ENCODE measurements at regions of chr10 and their contacts with region 1.

Region 1: DNA sequence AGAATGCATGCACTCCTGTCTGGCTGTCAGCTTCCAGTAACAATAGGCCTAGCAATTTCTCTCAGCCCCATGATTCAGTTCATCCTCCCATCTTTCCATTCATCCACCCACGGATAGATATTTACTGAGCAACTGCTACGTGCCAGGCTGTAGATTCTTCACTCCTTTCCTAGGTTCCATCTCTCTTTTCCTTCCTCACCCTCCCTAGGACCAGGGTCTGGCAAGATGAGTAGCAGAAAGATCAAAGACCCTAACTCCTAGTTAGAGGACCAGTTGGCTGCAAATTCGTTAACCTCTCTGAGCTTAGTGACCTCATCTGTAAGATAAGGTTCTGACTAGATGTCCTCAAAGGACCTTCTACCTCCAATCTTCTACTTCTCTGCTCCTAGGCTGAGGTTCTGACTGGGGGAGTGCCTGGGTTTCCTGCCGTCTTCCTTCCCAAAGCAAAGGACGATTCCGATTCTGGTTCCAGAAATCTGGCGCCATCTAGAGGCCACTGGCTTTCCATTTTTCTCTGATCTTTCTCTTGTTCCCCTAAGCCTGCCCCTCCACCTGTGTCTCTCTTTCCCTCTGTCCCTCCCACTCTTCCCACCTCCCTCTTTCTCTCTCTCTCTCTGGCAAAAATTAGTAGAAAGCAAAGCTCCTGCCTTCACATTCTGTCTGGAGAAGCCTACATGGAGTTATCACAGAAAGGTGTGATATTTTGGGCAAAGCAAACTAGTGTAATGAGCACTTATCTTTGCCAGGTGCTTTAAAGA is 26.2 kb downstream of the TBATA start:
- DNase-seq: peak; percentile 43 to 62 (median 55)
- H3K4me3 ChIP-seq: no peak overlapping the region
- H3K4me3 Mint-ChIP-seq: no peak overlapping the region
- H3K27ac ChIP-seq: no peak overlapping the region
- H3K27ac Mint-ChIP-seq: no peak overlapping the region
- H3K4me1 ChIP-seq: no peaks in the 10 kb centered on the region
- H3K4me1 Mint-ChIP-seq: peaks cover 0 to 2% (median under 1%) of the 10 kb centered on the region in 4 donors
- H3K27me3 ChIP-seq: no peaks in the 10 kb centered on the region
- H3K27me3 Mint-ChIP-seq: no peaks in the 10 kb centered on the region

Region 2: DNA sequence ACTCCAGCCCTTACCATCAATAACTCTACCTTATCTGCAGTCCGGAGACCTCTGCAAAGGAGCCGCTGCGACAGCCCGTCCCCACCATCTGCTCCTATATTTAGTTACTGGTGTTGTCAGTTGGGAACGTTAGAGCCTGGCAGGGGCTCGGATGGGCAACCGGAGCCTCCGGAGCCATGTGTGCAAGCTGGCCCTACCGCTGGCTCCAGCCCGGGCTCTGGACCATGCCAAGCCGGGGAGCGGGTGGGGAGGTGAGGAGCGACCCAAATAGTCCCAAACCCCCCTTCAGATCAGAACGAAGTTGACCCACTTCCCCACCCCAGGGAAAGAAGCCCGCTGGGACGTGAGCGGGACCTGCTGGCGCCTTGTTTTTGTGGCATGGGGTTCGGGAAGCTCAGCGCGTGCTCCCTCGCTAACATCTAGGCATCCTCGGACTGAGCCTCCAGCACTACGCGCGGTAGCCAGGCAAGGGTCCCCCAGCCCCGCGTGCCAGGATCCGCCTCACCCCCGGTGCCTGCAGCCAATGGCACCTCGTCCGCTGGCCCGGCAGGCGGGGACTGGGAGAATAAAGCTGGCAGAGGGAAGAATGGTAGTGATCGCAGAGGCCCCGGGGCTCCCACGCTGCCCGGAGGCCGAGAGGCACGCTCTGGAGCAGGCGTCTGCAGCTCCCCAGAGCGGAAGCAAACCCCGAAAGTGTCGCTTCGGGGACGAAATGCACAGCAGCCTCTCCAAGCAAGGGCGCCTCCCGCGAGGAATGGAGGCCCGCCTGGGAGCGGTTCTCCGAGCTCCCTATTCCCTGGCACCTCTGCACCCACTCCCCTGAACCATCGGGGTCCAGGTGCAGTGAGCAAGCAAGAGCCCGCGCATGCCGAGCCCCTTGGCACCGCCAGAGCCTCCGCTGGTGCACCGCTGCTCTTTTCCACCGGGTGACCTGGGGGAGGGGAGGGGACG is 377.2 kb before region 1 on chr10:
- CTCF ChIA-PET with region 1: no interaction called
- POLR2A ChIA-PET with region 1: no interaction called
- intact Hi-C with region 1: loop called (anchors 10 kb)
- DNase-seq: peak in 1 of 5 donors; percentile 10
- H3K4me3 ChIP-seq: peak overlapping the region; percentile 82 to 88
- H3K4me3 Mint-ChIP-seq: peak overlapping the region; percentile 88 to 92 (median 90)
- H3K27ac ChIP-seq: peak overlapping the region; percentile 16
- H3K27ac Mint-ChIP-seq: peak overlapping the region in 4 of 7 donors; percentile 37 to 70 (median 50)
- H3K4me1 ChIP-seq: peaks cover 13% of the 10 kb centered on the region
- H3K4me1 Mint-ChIP-seq: peaks cover 0 to 14% (median 6%) of the 10 kb centered on the region in 4 donors
- H3K27me3 ChIP-seq: no peaks in the 10 kb centered on the region
- H3K27me3 Mint-ChIP-seq: no peaks in the 10 kb centered on the region

Region 3: DNA sequence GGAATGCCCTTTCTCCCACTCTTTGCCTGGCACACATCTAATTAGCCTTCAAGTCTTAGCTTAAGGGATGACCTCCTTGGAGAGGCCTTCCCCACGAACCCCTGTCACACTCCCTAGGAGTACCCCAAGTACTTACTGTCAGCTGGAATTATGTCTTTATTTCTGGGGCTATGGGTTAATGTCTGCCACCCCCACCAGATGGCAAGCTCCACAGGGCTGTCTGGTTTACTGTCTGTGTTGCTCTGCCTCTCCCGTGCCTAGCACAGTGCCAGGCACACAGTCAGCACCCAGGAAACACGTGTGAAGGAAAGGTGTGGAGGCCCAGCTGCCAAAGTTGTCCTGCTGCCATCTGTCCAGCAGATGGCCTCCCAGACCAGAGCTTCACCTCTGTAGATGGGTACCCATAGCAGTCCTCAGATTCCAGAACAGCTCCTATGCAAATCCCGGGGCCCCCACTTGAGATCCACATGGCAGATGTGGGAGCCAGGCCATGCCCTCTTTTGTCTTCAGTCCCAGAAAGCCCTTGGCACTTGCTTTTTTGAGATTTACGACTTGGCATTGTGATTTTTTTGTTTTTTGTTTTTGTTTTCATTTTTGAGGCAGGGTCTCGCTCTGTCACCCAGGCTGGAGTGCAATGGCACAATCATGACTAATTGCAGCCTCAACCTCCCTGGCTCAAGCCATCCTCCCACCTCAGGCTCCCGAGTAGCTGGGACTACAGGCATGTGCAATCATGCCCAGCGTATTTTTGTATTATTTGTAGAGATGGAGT is 297.5 kb before region 1 on chr10:
- CTCF ChIA-PET with region 1: interaction called, 28 read pairs
- POLR2A ChIA-PET with region 1: no interaction called
- intact Hi-C with region 1: no loop called
- DNase-seq: peak in 4 of 5 donors; percentile 31 to 40 (median 32)
- H3K4me3 ChIP-seq: no peak overlapping the region
- H3K4me3 Mint-ChIP-seq: no peak overlapping the region
- H3K27ac ChIP-seq: no peak overlapping the region
- H3K27ac Mint-ChIP-seq: peak overlapping the region in 2 of 7 donors; percentile 35 to 64
- H3K4me1 ChIP-seq: peaks cover 10% of the 10 kb centered on the region
- H3K4me1 Mint-ChIP-seq: peaks cover 0 to 16% (median 1%) of the 10 kb centered on the region in 4 donors
- H3K27me3 ChIP-seq: peaks cover 11% of the 10 kb centered on the region
- H3K27me3 Mint-ChIP-seq: peaks cover 25 to 32% of the 10 kb centered on the region in 2 donors

Region 4: DNA sequence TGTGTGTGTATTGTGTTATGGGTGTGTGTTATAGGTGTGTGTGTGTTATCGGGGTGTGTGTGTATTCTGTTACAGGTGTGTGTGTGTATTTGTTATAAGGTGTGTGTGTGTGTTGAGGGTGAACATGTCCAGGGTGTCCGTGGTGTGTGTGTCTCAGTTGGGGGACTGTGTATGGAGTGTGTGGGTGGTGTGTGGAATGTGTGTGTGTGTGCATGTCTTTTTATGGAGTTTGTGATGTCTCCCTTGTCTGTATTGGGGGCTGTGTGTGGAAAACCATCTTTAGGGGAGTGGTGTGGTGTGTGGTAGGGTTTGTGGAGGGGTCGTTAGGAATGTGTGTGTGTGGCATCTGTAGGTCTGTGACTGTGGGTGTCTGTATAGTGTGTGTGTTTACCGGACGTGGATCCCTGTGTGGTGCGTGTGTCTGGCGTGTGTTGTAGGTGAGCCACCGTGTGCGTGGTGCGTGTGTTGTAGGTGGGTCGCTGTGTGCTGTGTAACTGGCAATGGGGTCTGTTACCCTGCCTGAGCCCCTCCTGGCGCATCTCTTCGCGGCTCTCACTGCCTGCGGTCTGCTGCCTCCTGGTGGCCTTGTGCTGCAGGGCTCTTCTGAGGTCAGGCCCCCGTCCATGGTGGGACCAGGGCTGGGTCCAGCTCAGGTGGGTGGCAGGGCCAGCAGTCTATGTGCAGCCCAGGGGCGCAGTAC is 218.7 kb before region 1 on chr10:
- CTCF ChIA-PET with region 1: interaction called, 12 read pairs
- POLR2A ChIA-PET with region 1: no interaction called
- intact Hi-C with region 1: no loop called
- DNase-seq: peak in 1 of 5 donors; percentile 10
- H3K4me3 ChIP-seq: no peak overlapping the region
- H3K4me3 Mint-ChIP-seq: no peak overlapping the region
- H3K27ac ChIP-seq: no peak overlapping the region
- H3K27ac Mint-ChIP-seq: peak overlapping the region in 1 of 7 donors; percentile 15
- H3K4me1 ChIP-seq: no peaks in the 10 kb centered on the region
- H3K4me1 Mint-ChIP-seq: no peaks in the 10 kb centered on the region
- H3K27me3 ChIP-seq: no peaks in the 10 kb centered on the region
- H3K27me3 Mint-ChIP-seq: no peaks in the 10 kb centered on the region

Region 5: GRCh38 chr10:70549962-70550458 is 208.9 kb before region 1 on chr10:
- CTCF ChIA-PET with region 1: interaction called, 162 read pairs
- POLR2A ChIA-PET with region 1: no interaction called
- intact Hi-C with region 1: loop called (anchors 1 kb)
- DNase-seq: peak; percentile 59 to 69 (median 63)
- H3K4me3 ChIP-seq: no peak overlapping the region
- H3K4me3 Mint-ChIP-seq: no peak overlapping the region
- H3K27ac ChIP-seq: no peak overlapping the region
- H3K27ac Mint-ChIP-seq: no peak overlapping the region
- H3K4me1 ChIP-seq: no peaks in the 10 kb centered on the region
- H3K4me1 Mint-ChIP-seq: no peaks in the 10 kb centered on the region
- H3K27me3 ChIP-seq: no peaks in the 10 kb centered on the region
- H3K27me3 Mint-ChIP-seq: no peaks in the 10 kb centered on the region

Region 6: DNA sequence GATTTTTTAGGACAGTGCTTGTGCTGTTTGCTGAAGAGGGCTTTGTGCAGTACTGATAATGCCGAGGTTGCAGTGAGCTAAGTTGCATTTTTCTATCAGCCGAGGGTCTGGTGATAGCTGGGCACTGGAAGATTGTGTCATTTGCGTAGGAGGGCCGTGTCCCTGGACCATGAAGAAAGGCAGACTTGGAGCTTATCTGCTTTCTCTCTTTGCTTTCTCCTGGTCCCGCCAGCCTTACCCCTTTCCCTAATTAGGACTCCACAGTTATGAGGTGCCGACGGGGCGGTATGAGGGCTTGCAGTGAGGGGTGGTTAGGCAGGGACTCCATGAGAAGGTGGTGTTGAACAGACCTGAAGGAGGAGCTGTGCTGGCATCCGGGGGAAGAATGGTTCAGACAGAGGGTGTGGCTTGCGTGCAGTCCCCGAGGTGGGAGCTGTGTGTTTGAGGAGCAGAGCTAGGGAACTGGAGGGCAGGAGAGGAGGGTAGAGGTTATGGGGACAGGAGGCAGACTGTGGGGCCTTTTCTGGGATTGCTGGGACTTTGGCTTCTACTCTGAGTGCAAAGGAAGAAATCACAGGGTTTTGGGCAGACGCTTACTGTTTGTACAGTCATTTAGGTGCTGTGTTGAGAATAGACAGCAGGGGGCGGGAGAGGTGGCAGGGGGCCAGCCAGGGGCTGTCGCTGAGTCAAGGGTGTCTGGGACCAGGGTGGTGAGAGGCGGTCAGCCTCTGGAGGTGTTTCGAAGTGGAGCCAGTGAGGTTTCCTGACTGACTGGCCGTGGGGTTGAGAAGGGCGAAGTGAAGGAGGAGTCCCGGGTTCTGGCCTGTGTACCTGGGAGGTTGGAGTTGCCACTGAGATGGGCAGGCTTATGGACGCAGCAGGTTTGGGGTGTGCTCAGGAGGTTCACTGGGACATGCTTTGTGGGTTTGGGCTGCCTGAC is 199.8 kb before region 1 on chr10:
- CTCF ChIA-PET with region 1: interaction called, 162 read pairs
- POLR2A ChIA-PET with region 1: no interaction called
- intact Hi-C with region 1: loop called (anchors 1 kb)
- DNase-seq: peak; percentile 45 to 66 (median 53)
- H3K4me3 ChIP-seq: no peak overlapping the region
- H3K4me3 Mint-ChIP-seq: peak overlapping the region; percentile 72 to 90 (median 84)
- H3K27ac ChIP-seq: no peak overlapping the region
- H3K27ac Mint-ChIP-seq: peak overlapping the region in 5 of 7 donors; percentile 1 to 77 (median 32)
- H3K4me1 ChIP-seq: peaks cover 9% of the 10 kb centered on the region
- H3K4me1 Mint-ChIP-seq: peaks cover 8 to 15% (median 13%) of the 10 kb centered on the region in 4 donors
- H3K27me3 ChIP-seq: no peaks in the 10 kb centered on the region
- H3K27me3 Mint-ChIP-seq: no peaks in the 10 kb centered on the region

Region 7: GRCh38 chr10:71176661-71177060 is 417.7 kb after region 1 on chr10:
- CTCF ChIA-PET with region 1: no interaction called
- POLR2A ChIA-PET with region 1: no interaction called
- intact Hi-C with region 1: no loop called
- DNase-seq: no peak
- H3K4me3 ChIP-seq: no peak overlapping the region
- H3K4me3 Mint-ChIP-seq: no peak overlapping the region
- H3K27ac ChIP-seq: no peak overlapping the region
- H3K27ac Mint-ChIP-seq: no peak overlapping the region
- H3K4me1 ChIP-seq: no peaks in the 10 kb centered on the region
- H3K4me1 Mint-ChIP-seq: no peaks in the 10 kb centered on the region
- H3K27me3 ChIP-seq: no peaks in the 10 kb centered on the region
- H3K27me3 Mint-ChIP-seq: peaks cover 0 to 2% of the 10 kb centered on the region in 2 donors

Measured in CD4-positive, alpha-beta memory T cell (primary cell).